ENCODE measurements at regions of chr3 and their contacts with region 1.

Region 1: DNA sequence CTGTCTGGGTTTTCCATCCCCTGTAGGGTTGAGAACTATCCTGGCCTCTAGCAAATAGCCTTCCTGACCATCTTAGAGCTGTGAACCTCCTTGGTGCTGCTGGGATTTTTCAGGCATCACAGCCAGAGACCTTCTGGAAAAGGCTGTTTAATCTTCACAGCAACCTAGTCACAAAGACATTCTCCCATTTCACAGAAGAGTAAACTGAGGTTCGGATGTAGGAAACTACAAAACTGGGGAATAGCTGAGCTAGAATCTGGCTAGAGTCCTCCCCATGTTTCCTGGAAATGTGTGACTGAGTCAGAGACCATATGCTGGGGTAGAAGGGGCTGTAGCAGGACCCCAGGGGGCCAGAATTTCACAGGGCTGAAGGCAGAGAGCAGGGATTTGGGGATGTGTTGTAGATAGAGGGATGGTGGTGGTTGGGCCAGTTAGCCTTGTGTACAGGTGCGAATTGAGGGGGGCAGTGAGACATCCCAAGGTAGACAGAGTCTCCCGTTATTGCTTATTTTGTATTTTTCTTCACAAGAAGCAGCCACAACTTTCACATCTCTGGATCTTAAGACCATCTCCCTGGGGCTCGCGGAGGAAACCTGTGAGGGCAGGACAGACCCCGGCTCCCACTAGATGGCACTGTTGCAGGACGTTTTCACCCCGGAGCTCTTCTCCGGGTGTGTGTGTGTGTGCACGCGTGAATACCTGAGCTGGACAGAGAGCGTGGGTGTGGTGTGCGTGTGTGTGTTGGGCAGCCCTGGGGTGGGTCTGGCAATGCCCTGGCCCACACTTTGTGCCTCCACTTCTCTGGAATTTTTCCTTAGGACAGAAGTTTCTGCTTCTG is 66.9 kb upstream of the PRR23C start:
- DNase-seq: no peak
- ATAC-seq: peak; percentile 92
- H3K4me3 ChIP-seq: no peak overlapping the region
- H3K27ac ChIP-seq: no peak overlapping the region
- H3K4me1 ChIP-seq: peaks cover 5% of the 10 kb centered on the region; the same call in 1 of the 2 replicates
- H3K27me3 ChIP-seq: no peaks in the 10 kb centered on the region
- CTCF ChIP-seq: peak; percentile 60 to 75 (median 67)
- EP300 ChIP-seq: no peak
- POLR2A ChIP-seq: no peak
- RAD21 ChIP-seq: peak; percentile 57

Region 2: DNA sequence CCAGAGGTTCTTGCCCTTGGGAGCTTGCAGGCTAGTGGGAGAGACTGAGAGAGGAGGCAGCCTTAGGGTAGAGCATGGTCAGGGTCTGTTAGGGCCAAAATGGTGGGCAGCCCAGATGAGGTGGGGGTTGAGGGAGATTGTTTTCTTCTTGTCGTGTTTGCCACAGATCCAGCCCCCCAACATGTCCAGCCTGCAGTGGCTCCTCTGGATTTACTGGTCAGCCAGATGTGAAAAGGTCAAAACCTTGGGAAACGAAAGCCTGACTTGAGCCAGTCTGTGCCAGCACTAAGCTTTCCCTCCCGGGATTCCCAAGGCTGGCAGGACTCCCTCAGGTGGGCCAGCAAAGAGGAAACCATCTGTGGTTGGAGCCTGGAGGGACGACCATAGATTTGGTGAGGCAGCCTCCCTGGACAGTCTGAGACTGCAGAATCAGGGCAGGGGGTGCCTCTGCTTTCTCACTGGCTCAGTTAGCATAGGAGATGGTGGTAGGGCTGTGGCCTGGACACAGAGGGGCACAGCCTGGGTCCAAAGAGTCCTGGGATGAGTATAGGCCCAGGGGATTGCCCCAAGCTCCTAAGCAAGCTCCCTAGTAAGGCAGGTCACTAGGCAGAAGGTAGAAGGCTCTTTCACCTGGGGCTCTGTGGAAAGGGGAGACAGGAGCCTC is 15.7 kb before region 1 on chr3:
- CTCF ChIA-PET with region 1: interaction called, 24 read pairs
- POLR2A ChIA-PET with region 1: no interaction called
- RAD21 ChIA-PET with region 1: no interaction called
- SMC1A ChIA-PET with region 1: no interaction called
- in situ Hi-C with region 1: no loop called
- intact Hi-C with region 1: no loop called
- DNase-seq: no peak
- ATAC-seq: no peak
- H3K4me3 ChIP-seq: no peak overlapping the region
- H3K27ac ChIP-seq: no peak overlapping the region
- H3K4me1 ChIP-seq: no peaks in the 10 kb centered on the region
- H3K27me3 ChIP-seq: no peaks in the 10 kb centered on the region
- CTCF ChIP-seq: no peak
- EP300 ChIP-seq: no peak
- POLR2A ChIP-seq: no peak
- RAD21 ChIP-seq: no peak

Region 3: GRCh38 chr3:139101396-139101795 is 10.2 kb before region 1 on chr3:
- CTCF ChIA-PET with region 1: interaction called, 24 read pairs
- POLR2A ChIA-PET with region 1: no interaction called
- RAD21 ChIA-PET with region 1: no interaction called
- SMC1A ChIA-PET with region 1: no interaction called
- in situ Hi-C with region 1: no loop called
- intact Hi-C with region 1: no loop called
- DNase-seq: no peak
- ATAC-seq: no peak
- H3K4me3 ChIP-seq: no peak overlapping the region
- H3K27ac ChIP-seq: no peak overlapping the region
- H3K4me1 ChIP-seq: no peaks in the 10 kb centered on the region
- H3K27me3 ChIP-seq: no peaks in the 10 kb centered on the region
- CTCF ChIP-seq: no peak
- EP300 ChIP-seq: no peak
- POLR2A ChIP-seq: no peak
- RAD21 ChIP-seq: no peak

Region 4: DNA sequence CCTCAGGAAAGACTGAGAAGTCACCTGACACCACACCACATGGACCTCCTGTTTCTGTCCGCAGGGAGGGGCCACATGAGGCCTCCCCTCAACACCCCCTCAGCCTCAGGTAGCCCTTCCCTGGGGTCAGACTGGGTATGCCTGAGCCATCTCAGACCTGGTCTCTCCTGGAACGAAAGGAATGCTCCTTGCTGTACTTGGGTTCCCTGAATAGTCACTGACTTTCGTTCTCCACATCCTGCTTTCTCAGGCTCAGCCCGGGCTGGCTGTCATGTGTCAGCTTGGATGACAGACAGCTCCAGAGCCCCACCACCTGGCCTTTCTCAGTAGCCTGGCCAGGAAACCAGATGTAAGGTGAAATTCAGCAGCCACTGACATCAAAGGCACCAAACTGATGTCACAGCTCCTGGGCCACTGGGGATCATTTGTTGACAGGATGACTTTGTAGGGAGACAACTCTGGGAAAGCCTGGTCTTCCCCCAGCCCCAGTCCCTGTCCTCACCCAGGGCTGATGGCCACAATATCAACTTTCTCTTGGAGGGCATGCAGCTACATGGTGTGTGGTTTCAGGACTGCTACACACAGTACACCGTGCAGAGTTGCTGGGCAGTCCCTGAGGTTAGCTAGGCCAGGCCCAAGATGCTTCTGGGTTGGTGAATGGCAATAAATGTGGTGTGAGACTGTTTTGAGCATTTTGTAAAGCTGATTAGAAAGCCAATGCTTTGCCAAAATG is 90.8 kb after region 1 on chr3:
- CTCF ChIA-PET with region 1: interaction called, 8 read pairs
- POLR2A ChIA-PET with region 1: no interaction called
- RAD21 ChIA-PET with region 1: interaction called, 9 read pairs
- SMC1A ChIA-PET with region 1: no interaction called
- in situ Hi-C with region 1: no loop called
- intact Hi-C with region 1: loop called (anchors 5 kb)
- DNase-seq: no peak
- ATAC-seq: peak; percentile 82
- H3K4me3 ChIP-seq: no peak overlapping the region
- H3K27ac ChIP-seq: no peak overlapping the region
- H3K4me1 ChIP-seq: peaks cover 5% of the 10 kb centered on the region; the same call in 1 of the 2 replicates
- H3K27me3 ChIP-seq: no peaks in the 10 kb centered on the region
- CTCF ChIP-seq: peak; percentile 15 to 49 (median 27); a peak in 3 of 6 replicates
- EP300 ChIP-seq: no peak
- POLR2A ChIP-seq: no peak
- RAD21 ChIP-seq: peak; percentile 54

Region 5: GRCh38 chr3:139319428-139320402 is 208.1 kb after region 1 on chr3:
- CTCF ChIA-PET with region 1: interaction called, 6 read pairs
- POLR2A ChIA-PET with region 1: no interaction called
- RAD21 ChIA-PET with region 1: interaction called, 4 read pairs
- SMC1A ChIA-PET with region 1: no interaction called
- in situ Hi-C with region 1: loop called (anchors 10 kb)
- intact Hi-C with region 1: no loop called
- DNase-seq: no peak
- ATAC-seq: 0 out of 3 replicates have a peak, but pooled peaks have one; percentile 36
- H3K4me3 ChIP-seq: no peak overlapping the region
- H3K27ac ChIP-seq: no peak overlapping the region
- H3K4me1 ChIP-seq: no peaks in the 10 kb centered on the region
- H3K27me3 ChIP-seq: no peaks in the 10 kb centered on the region; a peak in 1 of 4 replicates
- CTCF ChIP-seq: peak; percentile 7 to 38 (median 24); a peak in 4 of 6 replicates
- EP300 ChIP-seq: no peak
- POLR2A ChIP-seq: no peak
- RAD21 ChIP-seq: no peak

Region 6: DNA sequence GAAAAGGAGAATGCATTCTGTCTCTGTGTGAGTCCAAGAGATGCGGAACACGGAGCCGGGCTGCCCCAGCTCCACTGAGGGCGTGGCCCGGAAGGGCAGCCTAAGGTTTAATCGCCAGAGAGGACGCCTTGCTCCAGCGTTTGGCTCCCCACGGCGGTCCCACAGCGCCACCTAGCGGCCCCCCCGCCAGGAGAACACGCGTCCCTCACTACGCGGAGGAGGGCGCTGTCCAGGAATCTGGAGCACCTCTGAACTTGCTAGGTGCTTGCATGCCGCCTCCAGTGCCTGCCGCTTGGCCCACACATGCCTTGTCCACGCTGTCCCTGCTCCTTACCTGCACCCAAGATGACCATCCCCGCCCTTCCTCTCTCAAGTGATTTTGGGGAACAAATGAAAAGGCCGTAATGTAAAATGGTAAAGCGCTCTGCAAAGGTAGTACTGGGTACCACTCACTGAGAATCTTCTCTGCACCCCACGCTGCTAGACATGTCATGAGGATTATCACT is 217.8 kb after region 1 on chr3:
- CTCF ChIA-PET with region 1: interaction called, 51 read pairs
- POLR2A ChIA-PET with region 1: no interaction called
- RAD21 ChIA-PET with region 1: interaction called, 8 read pairs
- SMC1A ChIA-PET with region 1: interaction called, 4 read pairs
- in situ Hi-C with region 1: no loop called
- intact Hi-C with region 1: loop called (anchors 2 kb)
- DNase-seq: no peak
- ATAC-seq: peak; percentile 100
- H3K4me3 ChIP-seq: peak overlapping the region; percentile 43; the same call in 1 of the 2 replicates
- H3K27ac ChIP-seq: no peak overlapping the region
- H3K4me1 ChIP-seq: no peaks in the 10 kb centered on the region; the same call in 1 of the 2 replicates
- H3K27me3 ChIP-seq: peaks cover 0 to 1% of the 10 kb centered on the region in 2 experiments; a peak in 2 of 4 replicates
- CTCF ChIP-seq: peak; percentile 96 to 100 (median 97)
- EP300 ChIP-seq: no peak
- POLR2A ChIP-seq: no peak
- RAD21 ChIP-seq: peak; percentile 88